Activated naive CD4-positive, alpha-beta T cell treated with anti-CD3 and anti-CD28 coated beads for 36 hours (primary cell): ENCODE measurements at regions of chr1 and their contacts with region 1.

Region 1: DNA sequence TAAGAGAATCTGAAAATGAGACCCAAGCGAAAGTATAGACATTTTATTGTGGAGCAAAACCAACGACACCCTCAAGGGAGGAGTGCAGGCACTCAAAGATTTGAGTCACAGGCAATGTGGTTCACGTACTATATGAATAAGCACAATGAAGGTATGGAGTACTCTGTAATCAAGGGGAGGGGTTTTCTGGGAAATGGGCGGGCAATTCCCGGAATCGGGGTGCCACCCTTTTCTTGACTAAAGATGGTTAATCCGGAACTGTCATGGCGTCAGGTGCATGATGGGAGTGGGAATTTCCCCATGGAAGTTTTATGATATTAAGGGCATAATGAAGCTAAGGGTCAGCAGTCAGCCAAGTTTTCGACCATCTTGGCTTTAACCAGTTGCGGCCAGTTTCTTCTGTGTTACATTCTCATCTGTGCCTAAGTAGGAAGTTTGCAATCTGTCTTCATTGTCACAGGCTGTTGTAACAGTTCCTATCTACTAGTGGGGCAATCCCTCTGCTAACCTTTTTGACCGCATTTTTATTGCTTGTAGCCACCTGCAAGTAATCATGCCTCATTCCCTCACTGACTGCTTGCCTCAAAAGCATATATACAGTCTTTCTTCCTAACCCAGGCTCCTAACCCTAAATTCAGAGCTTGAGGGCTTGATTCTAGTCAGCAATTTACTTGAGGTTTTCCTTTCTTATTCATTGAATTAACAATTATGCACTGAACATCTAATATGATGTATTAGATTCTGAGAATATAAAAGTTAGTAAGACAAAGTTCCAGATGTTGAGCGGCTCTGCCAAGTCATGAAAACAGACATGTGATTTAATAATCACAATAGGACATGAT is 775 bp upstream of the AIM2 start:
- DNase-seq: peak; percentile 98
- H3K4me3 Mint-ChIP-seq: peak overlapping the region; percentile 76
- H3K27ac Mint-ChIP-seq: peak overlapping the region; percentile 98
- H3K4me1 Mint-ChIP-seq: peaks cover 32% of the 10 kb centered on the region
- H3K27me3 Mint-ChIP-seq: no peaks in the 10 kb centered on the region

Region 2: DNA sequence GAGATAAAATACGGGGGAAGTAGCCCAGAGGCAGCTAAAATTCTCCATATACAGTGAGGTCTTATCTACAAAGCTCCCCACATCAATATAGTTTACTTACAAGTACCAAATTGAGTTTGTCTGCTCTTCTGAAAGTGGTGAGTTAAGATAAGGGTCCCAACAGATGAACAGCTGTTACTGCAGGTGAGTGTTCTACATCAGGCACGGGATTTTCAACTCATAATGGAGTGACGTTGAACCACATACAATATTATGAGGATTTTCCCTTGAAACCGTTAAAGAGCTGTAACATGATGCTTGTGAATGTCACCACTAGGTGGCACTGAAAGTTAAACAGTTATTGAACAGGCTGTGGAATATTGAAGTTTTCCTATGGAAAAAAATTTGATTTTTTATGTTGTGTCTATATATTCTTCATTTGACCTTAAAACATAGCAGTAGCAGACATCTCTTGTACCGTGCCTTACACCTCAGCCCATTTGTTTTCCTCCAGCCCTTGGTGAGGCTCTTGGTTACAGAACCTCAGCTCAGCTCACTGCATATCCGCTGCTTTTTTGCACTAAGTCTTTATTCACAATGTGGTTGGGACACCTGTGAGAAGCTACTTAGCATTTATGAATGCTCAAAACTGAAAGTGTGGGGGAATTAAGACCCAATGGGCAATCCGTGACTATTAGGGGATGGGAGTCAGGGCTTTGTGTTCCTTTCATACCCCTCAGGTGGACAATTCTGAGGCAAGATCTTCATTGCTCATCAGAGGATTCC is 873.5 kb before region 1 on chr1:
- CTCF ChIA-PET with region 1: interaction called, 12 read pairs
- intact Hi-C with region 1: loop called (anchors 1 kb)
- DNase-seq: peak; percentile 23
- H3K4me3 Mint-ChIP-seq: no peak overlapping the region
- H3K27ac Mint-ChIP-seq: no peak overlapping the region
- H3K4me1 Mint-ChIP-seq: peaks cover 4% of the 10 kb centered on the region
- H3K27me3 Mint-ChIP-seq: peaks cover 25% of the 10 kb centered on the region

Region 3: DNA sequence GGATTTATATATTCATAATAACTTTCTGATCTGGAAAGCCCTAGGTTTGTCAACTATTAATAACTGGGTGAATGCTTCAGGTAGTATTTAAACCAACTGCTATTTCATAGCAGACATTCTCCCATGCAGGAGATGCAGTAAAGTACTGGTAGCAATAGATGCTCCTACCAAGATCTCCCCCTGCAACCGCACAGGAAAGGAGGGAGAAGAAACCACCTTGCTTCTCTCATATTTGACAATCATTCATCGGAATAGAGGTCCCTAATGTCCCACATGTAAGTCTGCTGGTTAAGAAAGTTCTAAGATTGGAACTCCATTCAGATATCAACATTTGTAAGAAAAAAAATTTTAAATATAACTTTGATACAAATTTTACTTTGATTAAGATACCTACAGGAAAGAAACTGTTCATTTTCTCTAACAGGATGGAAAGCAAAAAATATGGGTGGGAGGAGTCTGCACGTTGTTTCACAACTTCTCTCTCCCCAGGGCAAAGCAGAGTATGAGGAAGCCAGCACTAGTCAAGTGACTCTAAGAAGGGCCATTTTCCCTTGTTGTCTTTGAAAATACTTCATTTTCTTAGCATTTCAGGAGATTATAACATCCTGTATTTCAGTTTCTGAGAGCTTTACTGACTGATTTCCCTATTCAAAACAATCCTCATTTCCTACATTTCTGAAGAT is 146.1 kb before region 1 on chr1 and contains the start of gene PYHIN1:
- CTCF ChIA-PET with region 1: no interaction called
- intact Hi-C with region 1: loop called (anchors 2 kb)
- DNase-seq: peak; percentile 37
- H3K4me3 Mint-ChIP-seq: peak within 1 kb of the TSS; percentile 75
- H3K27ac Mint-ChIP-seq: peak within 1 kb of the TSS; percentile 86
- H3K4me1 Mint-ChIP-seq: peaks cover 35% of the 10 kb centered on the region
- H3K27me3 Mint-ChIP-seq: peaks cover 6% of the 10 kb centered on the region
- total RNA-seq, gene PYHIN1: 4.1 to 4.4 TPM

Region 4: GRCh38 chr1:159009704-159010361 is 67.5 kb before region 1 on chr1 and contains the start of gene IFI16:
- CTCF ChIA-PET with region 1: interaction called, 5 read pairs
- intact Hi-C with region 1: loop called (anchors 1 kb)
- DNase-seq: peak; percentile 82
- H3K4me3 Mint-ChIP-seq: peak within 1 kb of the TSS; percentile 91
- H3K27ac Mint-ChIP-seq: peak within 1 kb of the TSS; percentile 99
- H3K4me1 Mint-ChIP-seq: peaks cover 39% of the 10 kb centered on the region
- H3K27me3 Mint-ChIP-seq: no peaks in the 10 kb centered on the region
- total RNA-seq, gene IFI16: 287 to 288 TPM

Region 5: GRCh38 chr1:159089184-159089791 is 11.9 kb after region 1 on chr1:
- CTCF ChIA-PET with region 1: interaction called, 50 read pairs
- intact Hi-C with region 1: loop called (anchors 1 kb)
- DNase-seq: peak; percentile 44
- H3K4me3 Mint-ChIP-seq: no peak overlapping the region
- H3K27ac Mint-ChIP-seq: peak overlapping the region; percentile 47
- H3K4me1 Mint-ChIP-seq: peaks cover 49% of the 10 kb centered on the region
- H3K27me3 Mint-ChIP-seq: no peaks in the 10 kb centered on the region

Region 6: DNA sequence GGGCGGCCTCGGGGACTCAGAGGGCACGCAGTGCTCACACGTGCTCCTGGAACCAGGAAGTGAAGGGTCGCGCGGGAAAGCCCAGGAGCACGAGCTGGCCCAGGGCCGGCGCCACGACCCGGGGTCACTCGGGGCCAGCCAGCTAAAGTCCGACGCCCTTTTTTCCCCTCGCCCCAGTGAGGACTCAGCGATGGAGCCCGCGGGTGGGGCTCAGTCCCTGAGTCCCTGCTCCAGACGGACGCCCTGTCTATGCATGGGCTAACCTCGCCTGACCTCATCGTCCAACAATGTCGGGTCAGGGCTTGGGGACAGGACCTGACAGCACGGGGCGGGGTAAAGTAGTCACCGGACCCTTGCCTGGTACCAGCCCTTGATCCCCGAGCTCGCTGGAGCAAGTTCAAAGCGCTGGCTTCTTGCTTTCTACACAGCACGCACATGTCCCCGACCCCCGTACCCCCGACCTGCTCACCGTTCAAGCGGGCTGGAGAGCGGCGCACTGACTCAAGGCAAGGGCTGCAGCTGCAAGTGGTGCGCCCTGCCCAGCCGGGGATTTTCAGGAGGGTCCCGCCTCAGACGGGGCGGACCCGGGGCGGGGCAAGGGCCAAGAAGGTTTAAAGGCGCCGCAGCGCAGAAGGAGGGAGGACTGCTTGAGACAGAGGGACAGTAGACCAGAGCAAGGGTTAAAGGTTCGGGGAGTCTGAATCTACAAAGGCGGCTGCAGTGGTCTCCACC is 847.8 kb after region 1 on chr1 and contains the start of gene TAGLN2:
- CTCF ChIA-PET with region 1: no interaction called
- intact Hi-C with region 1: loop called (anchors 5 kb)
- DNase-seq: peak; percentile 89
- H3K4me3 Mint-ChIP-seq: peak within 1 kb of the TSS; percentile 91
- H3K27ac Mint-ChIP-seq: peak within 1 kb of the TSS; percentile 93
- H3K4me1 Mint-ChIP-seq: peaks cover 42% of the 10 kb centered on the region
- H3K27me3 Mint-ChIP-seq: no peaks in the 10 kb centered on the region
- total RNA-seq, gene TAGLN2: 453 to 454 TPM